Body of pancreas (tissue), 4 donors: ENCODE measurements at regions of chr19 and their contacts with region 1.

Region 1: GRCh38 chr19:43519436-43520088 is 7.4 kb downstream of the ETHE1 start:
- DNase-seq: peak; percentile 81 to 86 (median 82)
- ATAC-seq: peak; percentile 77
- H3K4me3 ChIP-seq: no peak overlapping the region
- H3K27ac ChIP-seq: no peak overlapping the region
- H3K4me1 ChIP-seq: peaks cover 1% of the 10 kb centered on the region
- H3K27me3 ChIP-seq: no peaks in the 10 kb centered on the region
- CTCF ChIP-seq: peak; percentile 73 to 90 (median 86)
- POLR2A ChIP-seq: no peak

Region 2: GRCh38 chr19:43446746-43447489 is 72.6 kb before region 1 on chr19:
- intact Hi-C with region 1: loop called (anchors 2 kb)
- DNase-seq: peak; percentile 75 to 80 (median 79)
- ATAC-seq: peak; percentile 83
- H3K4me3 ChIP-seq: no peak overlapping the region
- H3K27ac ChIP-seq: no peak overlapping the region
- H3K4me1 ChIP-seq: no peaks in the 10 kb centered on the region
- H3K27me3 ChIP-seq: no peaks in the 10 kb centered on the region
- CTCF ChIP-seq: peak; percentile 80 to 96 (median 92)
- POLR2A ChIP-seq: no peak